ENCODE measurements at regions of chr3 and their contacts with region 1.

Region 1: DNA sequence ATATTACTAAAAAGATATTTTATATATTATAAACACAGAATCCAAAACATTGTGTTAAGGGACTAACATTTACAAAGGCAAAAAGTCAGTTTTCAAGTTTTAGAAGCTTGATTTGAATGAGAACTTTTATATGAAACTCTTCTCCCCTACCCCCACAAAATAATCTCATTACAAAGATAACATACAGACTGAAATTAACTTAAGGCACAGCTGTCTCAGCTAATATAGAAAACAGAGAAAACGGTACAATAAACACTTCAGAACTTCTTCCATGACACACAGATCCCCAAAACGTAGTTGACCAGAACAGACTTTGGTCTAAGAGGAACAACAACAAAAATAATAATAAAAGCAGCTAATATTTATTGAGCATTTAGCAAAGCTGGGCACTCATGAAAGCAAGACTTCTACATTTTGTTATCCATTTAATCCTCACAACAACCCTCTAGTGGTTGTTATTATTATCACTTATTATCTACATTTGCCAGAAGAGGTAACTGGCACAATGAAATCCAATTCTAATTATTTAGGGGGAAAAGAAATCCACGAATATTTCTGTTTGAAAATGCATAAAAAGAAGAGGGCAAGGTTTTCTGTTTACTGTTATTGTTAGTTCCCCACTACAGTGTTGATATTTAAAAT is 68.1 kb downstream of the PFN2 start:
- DNase-seq: no peak
- H3K4me3 ChIP-seq: no peak overlapping the region
- H3K4me1 ChIP-seq: peaks cover 1% of the 10 kb centered on the region
- H3K27me3 ChIP-seq: no peaks in the 10 kb centered on the region

Region 2: GRCh38 chr3:149512209-149512782 is 390.3 kb before region 1 on chr3:
- in situ Hi-C with region 1: loop called (anchors 25 kb)
- DNase-seq: peak; percentile 72 to 80
- H3K4me3 ChIP-seq: no peak overlapping the region
- H3K4me1 ChIP-seq: peaks cover 3% of the 10 kb centered on the region
- H3K27me3 ChIP-seq: no peaks in the 10 kb centered on the region

Measured in HAP-1 (cell line).